ENCODE measurements at regions of chr11 and their contacts with region 1.

Region 1: GRCh38 chr11:94602430-94603372 is 35.5 kb downstream of the PIWIL4 start:
- DNase-seq: no peak

Region 2: GRCh38 chr11:94417386-94417987 is 185.2 kb before region 1 on chr11:
- intact Hi-C with region 1: no loop called
- DNase-seq: no peak

Region 3: DNA sequence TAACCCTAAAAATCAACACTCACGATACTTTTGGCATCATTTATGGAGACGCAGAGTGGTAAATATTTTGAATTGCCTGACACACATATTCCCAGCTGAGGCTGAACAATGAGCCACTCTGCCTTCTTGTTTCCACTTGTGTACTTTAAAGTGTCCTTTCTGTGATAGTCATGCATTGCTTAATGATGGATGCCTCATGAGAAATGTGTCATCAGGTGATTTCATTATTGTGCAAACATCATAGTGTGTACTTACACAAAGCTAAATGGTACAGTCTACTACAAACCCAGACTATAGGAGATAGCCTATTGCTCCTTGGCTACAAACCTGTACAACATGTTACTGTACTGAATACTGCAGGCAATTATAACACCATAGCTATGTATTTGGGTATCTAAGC is 153.3 kb before region 1 on chr11:
- intact Hi-C with region 1: no loop called
- DNase-seq: no peak

Region 4: DNA sequence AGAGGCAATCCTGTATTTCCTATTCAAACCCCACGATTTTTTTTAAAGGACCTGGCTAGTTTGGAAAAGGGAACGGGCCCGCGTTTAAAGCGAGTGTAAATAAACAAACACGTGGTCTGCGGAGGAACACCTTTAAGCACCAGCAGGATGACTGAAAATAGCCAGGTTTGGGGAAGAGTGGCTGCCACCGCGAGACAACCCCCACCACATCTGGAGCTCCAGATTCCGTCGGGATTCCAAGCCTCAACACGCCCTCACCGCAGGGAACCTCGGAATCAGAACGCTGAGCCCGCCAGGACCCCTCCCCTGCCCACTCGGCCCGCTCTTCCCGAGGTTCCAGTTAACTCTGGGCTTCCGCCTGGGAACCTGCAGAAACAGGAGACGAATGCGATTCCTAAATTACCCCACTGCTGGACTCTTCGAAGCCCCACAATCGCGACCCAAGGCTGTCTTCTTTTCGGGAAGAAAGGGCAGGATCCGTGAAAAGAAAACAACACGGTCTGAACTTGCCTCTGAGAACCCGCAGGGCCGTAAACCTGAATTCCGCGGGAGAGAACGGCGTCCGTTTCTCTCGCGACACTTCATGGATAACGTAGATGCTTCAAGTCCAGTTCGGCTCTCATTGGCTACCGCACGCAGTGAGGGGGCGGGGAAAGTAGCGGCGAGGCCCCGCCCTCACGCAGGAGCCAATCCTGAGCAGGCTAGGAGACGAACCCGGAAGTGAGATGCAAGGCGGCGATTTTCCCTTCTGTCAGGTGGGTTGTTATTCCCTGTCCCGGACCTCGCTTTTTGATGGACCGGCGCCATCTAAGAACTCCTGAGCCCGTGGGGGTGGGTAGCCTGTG is 109.2 kb before region 1 on chr11 and contains the starts of genes ANKRD49 and MRE11:
- intact Hi-C with region 1: no loop called
- DNase-seq: peak; percentile 99
- total RNA-seq, gene ANKRD49: 11.8 to 14.8 TPM
- total RNA-seq, gene MRE11: 15.2 to 15.9 TPM

Region 5: DNA sequence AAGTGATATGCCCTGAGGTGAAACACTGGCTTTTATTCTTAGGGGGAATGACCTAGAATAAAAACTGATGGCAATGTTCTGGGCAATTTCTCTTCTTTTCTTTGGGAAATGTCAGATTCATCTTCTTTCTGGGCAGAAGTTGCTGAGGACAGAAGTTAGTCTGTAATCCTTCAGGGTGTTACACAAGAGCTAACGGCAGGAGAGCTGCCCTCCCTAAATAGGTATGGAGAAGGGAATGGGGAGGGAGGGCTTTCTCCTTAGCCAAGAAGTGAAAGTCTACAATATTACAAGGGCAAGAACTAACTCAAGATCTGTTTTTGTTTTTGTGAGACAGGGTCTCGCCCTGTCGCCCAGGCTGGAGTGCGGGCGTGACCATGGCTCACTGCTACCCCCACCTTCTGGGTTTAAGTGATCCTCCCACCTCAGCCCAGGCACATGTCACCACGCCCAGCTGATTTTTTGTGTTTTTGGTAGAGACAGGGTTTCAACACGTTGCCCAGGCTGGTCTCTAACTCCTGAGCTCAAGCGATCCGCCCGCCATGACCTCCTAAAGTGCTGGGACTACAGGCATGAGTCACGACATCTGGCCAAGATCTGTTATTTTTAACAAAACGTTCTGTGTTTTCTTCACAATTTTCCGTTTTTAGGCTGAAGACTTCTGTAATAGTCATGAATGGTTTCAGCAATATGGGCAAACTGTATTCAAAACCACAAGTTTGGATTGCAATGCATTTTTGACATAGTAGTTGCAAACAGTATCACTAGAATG is 28.3 kb before region 1 on chr11:
- intact Hi-C with region 1: loop called in 1 of 2 experiments (anchors 1 kb)
- DNase-seq: no peak

Region 6: GRCh38 chr11:95119374-95120060 is 516.8 kb after region 1 on chr11:
- intact Hi-C with region 1: no loop called
- DNase-seq: no peak

Measured in posterior vena cava (tissue), 2 donors.